ENCODE measurements at regions of chr5 and their contacts with region 1.

Region 1: DNA sequence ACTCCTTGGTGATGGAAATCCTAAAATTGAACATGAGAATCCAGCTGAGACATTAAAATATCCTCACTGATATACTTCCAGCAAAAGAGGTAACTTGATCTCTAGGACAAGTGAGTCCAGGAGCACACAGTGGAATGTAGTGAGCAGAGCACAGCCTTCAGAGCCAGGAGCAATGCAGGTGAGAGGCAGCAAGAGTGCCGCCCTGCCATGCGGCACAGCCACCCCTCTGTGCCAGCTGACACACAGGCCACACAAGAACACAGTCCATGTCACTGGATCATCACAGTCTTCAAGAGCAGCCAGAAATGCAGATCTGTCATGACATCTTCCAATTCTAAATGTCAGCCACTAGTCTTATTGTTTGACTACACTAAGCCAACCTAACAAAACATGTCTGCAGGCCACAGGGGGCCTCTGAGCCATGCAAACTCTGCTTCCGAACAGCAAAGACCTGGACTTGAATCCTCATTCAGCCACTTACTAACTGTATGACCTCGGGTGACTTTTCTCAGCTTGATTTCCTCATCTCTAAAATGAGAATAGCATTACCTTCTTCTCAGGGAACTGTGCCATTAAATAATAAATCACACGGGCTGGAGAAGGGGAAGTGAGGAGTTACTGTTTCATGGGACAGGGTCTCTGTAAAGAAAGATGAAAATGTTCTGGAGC is 47.0 kb downstream of the CCDC125 start:
- DNase-seq: no peak
- H3K4me3 Mint-ChIP-seq: no peak overlapping the region
- H3K27ac Mint-ChIP-seq: no peak overlapping the region
- H3K4me1 Mint-ChIP-seq: no peaks in the 10 kb centered on the region
- H3K27me3 Mint-ChIP-seq: no peaks in the 10 kb centered on the region

Region 2: DNA sequence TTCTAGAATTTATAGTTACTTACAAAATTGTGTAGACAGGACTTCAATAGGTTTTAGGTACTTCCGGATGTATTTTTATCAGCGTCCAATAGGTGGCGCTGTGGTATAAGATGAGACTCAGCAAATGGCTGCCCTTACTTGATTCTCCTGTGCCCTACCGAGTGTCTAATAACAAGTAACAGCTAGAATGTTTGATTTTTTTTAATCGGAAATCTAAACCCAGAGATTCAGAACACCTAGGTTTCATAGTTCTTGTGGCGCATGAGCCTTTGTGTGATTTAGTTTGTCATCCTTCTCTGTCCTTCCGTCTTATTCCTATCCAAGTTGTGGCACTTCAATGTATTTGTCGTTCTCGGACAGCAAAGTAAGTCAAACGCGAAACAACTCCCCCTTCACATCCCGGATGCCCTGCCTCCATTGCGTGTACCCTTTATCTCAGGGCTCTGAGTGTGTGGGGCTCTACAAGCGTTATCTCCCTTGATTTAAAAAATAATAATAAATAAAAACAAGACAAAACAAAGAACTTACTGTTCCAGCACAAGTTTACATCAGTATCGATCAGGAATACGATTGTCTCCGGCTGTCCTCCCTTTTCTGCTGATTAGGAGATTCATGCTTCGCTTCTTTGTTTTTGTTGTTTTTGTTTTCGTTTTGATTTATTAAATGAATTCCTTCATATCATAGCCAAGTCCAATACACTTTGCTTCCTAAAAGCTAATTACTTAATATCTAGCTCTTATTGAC is 242.5 kb before region 1 on chr5:
- CTCF ChIA-PET with region 1: interaction called, 3 read pairs
- POLR2A ChIA-PET with region 1: no interaction called
- intact Hi-C with region 1: loop called (anchors 10 kb)
- DNase-seq: peak; percentile 82
- H3K4me3 Mint-ChIP-seq: peak overlapping the region; percentile 70
- H3K27ac Mint-ChIP-seq: peak overlapping the region; percentile 76
- H3K4me1 Mint-ChIP-seq: peaks cover 8% of the 10 kb centered on the region
- H3K27me3 Mint-ChIP-seq: no peaks in the 10 kb centered on the region

Region 3: DNA sequence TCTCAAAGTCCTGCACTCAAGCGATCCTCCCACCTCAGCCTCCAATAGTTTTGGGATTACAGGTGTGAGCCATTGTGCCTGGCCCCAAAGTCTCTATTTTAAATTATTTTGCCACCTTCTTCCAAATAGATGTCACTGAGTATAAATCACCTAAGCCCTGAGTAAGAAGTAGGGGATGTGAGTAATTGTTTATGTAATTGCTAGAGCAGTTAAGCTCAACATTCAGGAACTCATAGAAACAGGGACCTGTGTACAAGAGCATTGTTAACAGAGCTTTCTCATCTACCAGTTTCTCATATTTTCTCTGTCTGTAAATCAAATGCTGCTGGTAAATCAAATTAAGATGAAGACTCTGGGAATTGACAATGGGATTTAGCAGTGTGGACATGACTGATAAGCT is 24.5 kb before region 1 on chr5:
- CTCF ChIA-PET with region 1: no interaction called
- POLR2A ChIA-PET with region 1: no interaction called
- intact Hi-C with region 1: no loop called
- DNase-seq: no peak
- H3K4me3 Mint-ChIP-seq: no peak overlapping the region
- H3K27ac Mint-ChIP-seq: no peak overlapping the region
- H3K4me1 Mint-ChIP-seq: no peaks in the 10 kb centered on the region
- H3K27me3 Mint-ChIP-seq: no peaks in the 10 kb centered on the region

Region 4: DNA sequence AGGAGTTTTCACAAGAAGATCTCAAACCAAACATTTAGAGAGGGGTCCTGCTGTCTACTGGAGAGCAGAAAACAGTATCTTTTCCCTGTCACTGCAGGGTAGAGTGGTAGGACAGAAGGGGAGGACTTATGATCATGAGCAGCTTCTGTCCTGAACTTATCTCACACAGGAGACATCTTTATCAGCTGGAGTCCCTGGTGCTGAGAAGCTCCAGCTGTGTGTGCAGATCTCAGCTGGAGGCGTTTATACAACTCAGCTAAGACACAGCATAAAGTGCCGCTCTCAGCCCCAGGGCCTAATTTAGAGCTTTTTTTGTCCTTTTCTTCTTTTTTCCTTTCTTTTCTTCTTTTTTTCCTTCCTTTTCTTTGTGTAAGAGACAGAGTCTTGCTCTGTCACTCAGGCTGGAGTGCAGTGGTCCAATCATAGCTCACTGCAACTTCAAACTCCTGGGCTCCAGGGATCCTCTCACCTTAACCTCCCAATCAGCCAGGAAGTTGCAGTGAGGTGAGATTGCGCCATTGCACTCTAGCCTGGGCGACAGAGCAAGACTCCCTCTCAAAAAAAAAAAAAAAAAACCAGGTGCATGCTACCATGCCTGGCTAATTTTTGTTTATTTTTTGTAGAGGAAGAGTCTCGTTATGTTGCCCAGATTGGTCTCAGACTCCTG is 15.1 kb after region 1 on chr5:
- CTCF ChIA-PET with region 1: no interaction called
- POLR2A ChIA-PET with region 1: no interaction called
- intact Hi-C with region 1: no loop called
- DNase-seq: no peak
- H3K4me3 Mint-ChIP-seq: no peak overlapping the region
- H3K27ac Mint-ChIP-seq: no peak overlapping the region
- H3K4me1 Mint-ChIP-seq: no peaks in the 10 kb centered on the region
- H3K27me3 Mint-ChIP-seq: no peaks in the 10 kb centered on the region

Measured in activated CD4-positive, alpha-beta memory T cell treated with anti-CD3 and anti-CD28 coated beads for 36 hours (primary cell).